Activated naive CD4-positive, alpha-beta T cell treated with anti-CD3 and anti-CD28 coated beads for 36 hours (primary cell): ENCODE measurements at regions of chr10 and their contacts with region 1.

Region 1: GRCh38 chr10:48594803-48595538 is 9.9 kb downstream of the ARHGAP22 start:
- DNase-seq: no peak
- H3K4me3 Mint-ChIP-seq: no peak overlapping the region
- H3K27ac Mint-ChIP-seq: no peak overlapping the region
- H3K4me1 Mint-ChIP-seq: no peaks in the 10 kb centered on the region
- H3K27me3 Mint-ChIP-seq: peaks cover 2% of the 10 kb centered on the region

Region 2: DNA sequence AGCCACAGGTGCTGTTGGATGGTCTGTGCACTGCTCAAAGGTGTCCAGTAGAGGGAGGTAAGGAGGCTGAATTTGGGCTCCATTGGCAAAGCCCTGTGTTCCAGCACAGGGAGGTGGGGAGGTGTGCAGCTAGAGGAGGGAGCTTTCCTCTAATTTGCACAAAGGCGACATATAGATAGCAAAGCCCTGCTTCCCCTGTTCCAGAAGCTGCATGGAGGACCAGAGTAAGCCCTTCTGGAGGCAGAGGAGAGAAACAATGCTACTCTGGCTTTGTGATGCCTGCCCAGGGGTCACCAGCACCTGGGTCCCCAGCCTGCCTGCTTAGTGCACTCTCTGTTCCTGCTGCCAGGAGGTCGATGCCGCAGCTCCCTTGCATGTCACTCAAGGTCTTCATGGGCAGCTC is 13.3 kb after region 1 on chr10:
- CTCF ChIA-PET with region 1: interaction called, 10 read pairs
- intact Hi-C with region 1: no loop called
- DNase-seq: peak; percentile 45
- H3K4me3 Mint-ChIP-seq: no peak overlapping the region
- H3K27ac Mint-ChIP-seq: no peak overlapping the region
- H3K4me1 Mint-ChIP-seq: peaks cover 3% of the 10 kb centered on the region
- H3K27me3 Mint-ChIP-seq: peaks cover 43% of the 10 kb centered on the region